ENCODE measurements at regions of chr7 and their contacts with region 1.

Region 1: GRCh38 chr7:97104719-97105238 is 12.7 kb upstream of the SDHAF3 start:
- DNase-seq: peak; percentile 84 to 93 (median 87)
- H3K4me3 ChIP-seq: no peak overlapping the region
- H3K27ac ChIP-seq: no peak overlapping the region
- H3K4me1 ChIP-seq: no peaks in the 10 kb centered on the region
- H3K27me3 ChIP-seq: no peaks in the 10 kb centered on the region
- CTCF ChIP-seq: peak; percentile 52 to 88 (median 76)
- POLR2A ChIP-seq: no peak

Region 2: DNA sequence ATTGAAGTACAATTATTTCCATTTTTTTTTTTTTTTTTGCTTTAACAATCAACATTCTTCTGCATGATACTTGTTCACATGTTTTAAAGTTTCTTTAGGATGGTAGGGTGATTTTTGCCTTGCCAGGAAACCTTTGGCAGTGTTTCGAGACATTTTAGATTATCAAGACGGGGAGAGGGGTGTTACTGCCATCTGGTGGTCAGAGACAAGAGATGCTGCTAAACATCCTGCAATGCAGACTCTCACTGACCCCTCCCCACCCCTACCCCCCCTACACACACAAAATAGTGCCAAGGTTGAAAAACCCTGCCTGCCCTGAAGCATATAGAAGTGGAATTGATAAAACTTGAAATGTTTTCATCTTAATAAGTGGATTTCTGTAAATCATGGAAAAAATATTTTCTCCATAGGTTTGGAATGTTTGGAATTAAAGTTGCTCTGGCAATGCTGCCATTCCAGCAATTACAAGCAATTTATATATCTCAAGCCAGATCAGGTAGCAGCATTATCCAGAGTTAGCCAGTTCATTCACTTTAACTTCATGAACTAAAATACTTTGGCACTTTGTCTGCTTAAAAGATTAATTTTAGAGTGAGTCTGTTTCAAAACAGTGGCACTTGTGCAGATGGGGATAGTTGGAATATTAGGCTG is 74.8 kb after region 1 on chr7:
- intact Hi-C with region 1: loop called in 1 of 2 experiments (anchors 5 kb)
- DNase-seq: peak; percentile 34 to 66 (median 49)
- H3K4me3 ChIP-seq: no peak overlapping the region
- H3K27ac ChIP-seq: no peak overlapping the region
- H3K4me1 ChIP-seq: no peaks in the 10 kb centered on the region
- H3K27me3 ChIP-seq: no peaks in the 10 kb centered on the region
- CTCF ChIP-seq: peak; percentile 44 to 84 (median 65)
- POLR2A ChIP-seq: no peak

Region 3: DNA sequence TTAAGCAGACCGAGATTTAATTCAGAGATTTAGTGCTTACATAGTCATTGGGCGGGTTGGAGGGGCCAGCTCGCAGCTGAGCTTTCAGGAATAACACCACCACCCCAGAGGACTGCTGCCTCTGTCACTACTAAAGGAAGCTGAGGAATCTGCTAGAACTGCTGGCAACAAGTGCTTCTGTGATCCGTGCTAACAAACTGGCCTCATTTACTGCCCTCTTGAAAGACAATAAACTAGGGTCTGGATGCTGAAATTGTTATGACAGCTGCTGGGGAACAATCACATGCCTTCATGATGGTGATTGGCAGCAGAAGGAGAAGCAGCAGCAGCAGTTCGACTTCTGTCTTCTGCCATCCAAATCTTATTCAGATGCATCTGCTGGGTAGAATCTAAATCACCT is 341.6 kb after region 1 on chr7:
- intact Hi-C with region 1: no loop called
- DNase-seq: no peak
- H3K4me3 ChIP-seq: no peak overlapping the region
- H3K27ac ChIP-seq: peak overlapping the region in 1 of 5 donors; percentile 10
- H3K4me1 ChIP-seq: no peaks in the 10 kb centered on the region
- H3K27me3 ChIP-seq: no peaks in the 10 kb centered on the region
- CTCF ChIP-seq: no peak
- POLR2A ChIP-seq: no peak

Region 4: GRCh38 chr7:97845622-97846203 is 740.9 kb after region 1 on chr7:
- intact Hi-C with region 1: loop called in 1 of 2 experiments (anchors 5 kb)
- DNase-seq: peak in 1 of 7 donors; percentile 23
- H3K4me3 ChIP-seq: no peak overlapping the region
- H3K27ac ChIP-seq: no peak overlapping the region
- H3K4me1 ChIP-seq: no peaks in the 10 kb centered on the region
- H3K27me3 ChIP-seq: no peaks in the 10 kb centered on the region
- CTCF ChIP-seq: peak; percentile 42 to 57 (median 46)
- POLR2A ChIP-seq: no peak